Gastrocnemius medialis (tissue), 4 donors: ENCODE measurements at regions of chr10 and their contacts with region 1.

Region 1: GRCh38 chr10:35027567-35027966 is 62.6 kb downstream of the CUL2 start:
- DNase-seq: no peak
- ATAC-seq: no peak
- H3K4me3 ChIP-seq: no peak overlapping the region
- H3K27ac ChIP-seq: no peak overlapping the region
- H3K4me1 ChIP-seq: no peaks in the 10 kb centered on the region
- H3K27me3 ChIP-seq: no peaks in the 10 kb centered on the region
- CTCF ChIP-seq: peak in 1 of 5 experiments; percentile 30
- POLR2A ChIP-seq: no peak

Region 2: GRCh38 chr10:34677591-34677990 is 350.0 kb before region 1 on chr10:
- in situ Hi-C with region 1: no loop called
- intact Hi-C with region 1: loop called (anchors 10 kb)
- DNase-seq: no peak
- ATAC-seq: no peak
- H3K4me3 ChIP-seq: no peak overlapping the region
- H3K27ac ChIP-seq: no peak overlapping the region
- H3K4me1 ChIP-seq: peaks cover 12 to 16% of the 10 kb centered on the region in 2 donors
- H3K27me3 ChIP-seq: no peaks in the 10 kb centered on the region
- CTCF ChIP-seq: no peak
- POLR2A ChIP-seq: no peak

Region 3: GRCh38 chr10:35124540-35124939 is 97.0 kb after region 1 on chr10:
- in situ Hi-C with region 1: no loop called
- intact Hi-C with region 1: no loop called
- DNase-seq: no peak
- ATAC-seq: no peak
- H3K4me3 ChIP-seq: no peak overlapping the region
- H3K27ac ChIP-seq: no peak overlapping the region
- H3K4me1 ChIP-seq: peaks cover 11 to 18% of the 10 kb centered on the region in 2 donors
- H3K27me3 ChIP-seq: no peaks in the 10 kb centered on the region
- CTCF ChIP-seq: no peak
- POLR2A ChIP-seq: no peak

Region 4: DNA sequence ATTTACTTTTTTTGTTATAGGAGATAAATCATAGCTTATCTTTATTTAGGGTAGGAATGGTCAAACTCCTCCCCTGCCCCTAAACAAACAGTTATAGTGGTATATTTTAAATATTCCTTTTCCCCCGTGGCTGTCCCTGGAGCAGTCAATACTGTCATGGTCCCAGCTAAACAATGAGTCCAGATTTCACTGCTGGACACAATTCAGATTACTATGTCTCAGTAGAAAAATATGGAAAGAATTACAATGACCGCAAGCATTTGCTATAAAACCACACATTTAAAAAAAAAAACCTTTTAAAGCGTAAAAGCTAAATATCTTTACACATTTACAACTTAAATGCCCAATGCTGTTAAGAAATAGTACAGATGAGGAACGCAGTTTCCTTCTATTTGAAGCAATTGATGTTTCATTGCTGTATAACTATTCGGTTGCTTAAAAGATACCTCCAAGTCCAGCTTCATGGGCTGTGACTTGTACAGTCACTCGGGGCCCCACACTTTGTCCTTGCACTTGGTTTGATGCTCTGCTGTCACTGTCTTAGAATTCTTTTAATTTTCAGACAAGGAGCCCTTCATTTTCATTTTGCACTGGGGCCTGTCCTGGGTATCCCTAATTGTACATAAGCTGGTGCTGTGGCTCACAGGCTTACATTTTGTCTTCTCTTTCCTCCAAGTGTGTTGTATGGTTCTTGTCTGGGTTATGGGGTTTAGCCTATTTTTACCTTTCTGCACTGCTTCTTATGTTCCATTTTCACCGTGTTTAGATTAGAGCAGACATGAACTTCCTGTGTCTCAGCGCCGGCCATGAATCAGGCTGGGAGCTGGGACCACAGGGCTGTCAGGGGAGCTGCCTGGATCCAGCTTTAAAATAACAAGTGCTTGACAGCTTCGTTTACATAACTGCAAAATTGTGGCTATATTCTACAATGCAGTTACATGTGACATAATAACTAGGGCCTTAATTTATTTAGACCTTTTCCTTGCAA is 1144.7 kb after region 1 on chr10:
- in situ Hi-C with region 1: no loop called
- intact Hi-C with region 1: no loop called
- DNase-seq: no peak
- ATAC-seq: no peak
- H3K4me3 ChIP-seq: no peak overlapping the region
- H3K27ac ChIP-seq: peak overlapping the region in 1 of 4 donors; percentile 19
- H3K4me1 ChIP-seq: peaks cover 0 to 3% of the 10 kb centered on the region in 2 donors
- H3K27me3 ChIP-seq: no peaks in the 10 kb centered on the region
- CTCF ChIP-seq: no peak
- POLR2A ChIP-seq: no peak